Posterior vena cava (tissue), 2 donors: ENCODE measurements at regions of chr12 and their contacts with region 1.

Region 1: GRCh38 chr12:46372544-46373110 is at the start of gene SLC38A2:
- DNase-seq: peak; percentile 99
- total RNA-seq, gene SLC38A2: 255 to 324 TPM

Region 2: DNA sequence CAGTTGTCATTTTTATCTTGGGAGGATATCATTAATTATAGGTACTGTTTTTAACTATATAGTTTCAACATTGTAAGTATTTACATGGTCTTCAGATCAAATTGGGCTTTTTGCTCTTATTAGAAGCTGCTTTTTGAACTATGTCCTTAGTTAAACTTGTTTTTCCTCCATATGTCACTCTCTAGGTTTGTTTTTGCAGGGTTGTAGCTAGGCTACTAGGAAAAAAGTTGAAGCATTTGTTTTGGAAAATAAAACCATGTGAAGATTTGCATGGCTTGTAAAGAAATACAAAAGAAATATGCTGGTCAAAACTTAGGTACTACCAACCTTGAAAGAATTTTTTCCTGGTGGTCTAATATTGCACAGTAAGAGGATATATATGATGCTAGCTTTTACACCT is 639.7 kb before region 1 on chr12:
- intact Hi-C with region 1: no loop called
- DNase-seq: no peak

Region 3: DNA sequence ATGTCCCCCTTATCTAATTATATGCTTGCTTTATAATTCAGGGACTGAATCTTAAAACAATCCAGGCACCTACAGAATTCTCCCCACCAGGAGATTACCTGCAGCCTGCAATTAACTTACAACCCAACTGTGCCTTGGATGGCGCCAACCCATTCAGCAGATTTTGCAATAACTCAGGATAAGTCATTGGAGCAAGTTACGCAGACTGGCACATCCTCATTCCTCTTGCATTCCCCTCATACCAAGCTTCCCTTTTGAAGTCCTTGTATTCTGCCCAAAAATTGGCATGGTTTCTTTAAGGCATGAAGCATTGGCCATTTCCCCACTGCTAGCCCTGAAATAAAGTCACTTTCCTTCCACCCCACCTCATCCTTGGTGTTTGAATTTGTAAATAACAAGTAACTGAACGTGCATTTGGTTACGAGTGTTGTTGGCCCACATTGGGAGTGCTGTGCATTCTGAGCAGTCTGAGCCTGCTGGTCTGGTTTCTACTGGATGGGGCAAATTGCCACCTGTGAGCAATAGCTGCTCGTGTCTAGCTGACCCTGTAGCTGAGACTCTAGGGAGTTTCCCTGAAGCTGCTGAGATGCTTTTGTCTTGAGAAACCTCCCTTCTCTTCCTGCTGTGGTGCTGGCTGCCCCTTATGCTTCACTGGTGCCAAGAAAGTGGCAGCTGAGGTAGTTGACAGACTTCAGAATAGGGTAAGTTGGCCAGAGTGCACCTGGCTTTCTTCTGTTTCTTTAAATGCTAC is 283.0 kb before region 1 on chr12:
- intact Hi-C with region 1: no loop called
- DNase-seq: no peak

Region 4: DNA sequence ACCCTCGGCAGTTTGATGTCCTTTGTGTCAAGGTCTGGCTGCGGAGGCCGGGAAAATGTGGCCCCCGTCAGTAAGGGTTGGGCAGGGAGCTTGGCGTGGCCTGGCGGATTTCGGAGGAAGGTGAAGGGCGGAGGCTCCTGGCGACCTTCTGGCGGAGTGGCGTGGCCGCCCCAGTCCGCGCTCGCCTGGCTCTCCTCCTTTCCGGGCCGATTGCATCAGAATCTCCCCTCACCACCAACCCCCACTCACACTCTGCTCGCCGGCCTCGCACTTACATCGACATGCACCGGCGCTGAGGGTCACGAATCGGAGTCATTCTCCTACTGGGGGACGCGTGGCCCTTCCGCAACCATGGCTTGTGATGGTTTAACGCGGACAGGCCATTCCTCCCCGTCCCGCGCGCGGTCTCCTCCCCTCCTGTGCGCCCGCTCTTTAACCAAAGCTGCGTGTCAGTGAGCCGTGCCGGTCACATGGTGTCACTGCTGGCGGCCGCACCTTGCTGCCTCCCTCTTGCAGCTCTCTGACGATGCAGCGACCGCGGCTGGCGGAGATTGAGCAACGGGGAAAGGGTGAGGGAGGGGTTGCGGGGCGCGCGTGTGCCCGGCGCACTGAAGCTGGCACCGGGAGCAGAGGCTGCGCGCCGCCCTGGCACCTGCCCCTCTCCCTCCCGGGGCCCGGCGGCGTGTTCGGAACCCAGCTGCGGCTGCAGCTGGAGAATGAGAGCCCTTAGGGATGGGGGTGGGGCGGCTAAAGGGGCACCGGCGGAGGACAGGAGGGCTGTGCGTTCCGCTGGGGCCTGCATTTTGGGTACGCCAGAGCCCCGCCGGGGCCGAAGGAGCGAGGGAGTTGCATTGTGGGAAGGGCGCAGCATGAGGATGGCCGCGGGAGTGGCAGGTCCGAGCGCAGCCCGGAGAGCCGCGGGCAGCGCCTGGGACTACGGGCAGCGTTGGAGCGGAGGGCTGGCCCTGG is 103.8 kb before region 1 on chr12 and contains the start of gene SLC38A1:
- intact Hi-C with region 1: loop called in 1 of 2 experiments (anchors 5 kb)
- DNase-seq: peak; percentile 94
- total RNA-seq, gene SLC38A1: 74.4 to 88.0 TPM

Region 5: DNA sequence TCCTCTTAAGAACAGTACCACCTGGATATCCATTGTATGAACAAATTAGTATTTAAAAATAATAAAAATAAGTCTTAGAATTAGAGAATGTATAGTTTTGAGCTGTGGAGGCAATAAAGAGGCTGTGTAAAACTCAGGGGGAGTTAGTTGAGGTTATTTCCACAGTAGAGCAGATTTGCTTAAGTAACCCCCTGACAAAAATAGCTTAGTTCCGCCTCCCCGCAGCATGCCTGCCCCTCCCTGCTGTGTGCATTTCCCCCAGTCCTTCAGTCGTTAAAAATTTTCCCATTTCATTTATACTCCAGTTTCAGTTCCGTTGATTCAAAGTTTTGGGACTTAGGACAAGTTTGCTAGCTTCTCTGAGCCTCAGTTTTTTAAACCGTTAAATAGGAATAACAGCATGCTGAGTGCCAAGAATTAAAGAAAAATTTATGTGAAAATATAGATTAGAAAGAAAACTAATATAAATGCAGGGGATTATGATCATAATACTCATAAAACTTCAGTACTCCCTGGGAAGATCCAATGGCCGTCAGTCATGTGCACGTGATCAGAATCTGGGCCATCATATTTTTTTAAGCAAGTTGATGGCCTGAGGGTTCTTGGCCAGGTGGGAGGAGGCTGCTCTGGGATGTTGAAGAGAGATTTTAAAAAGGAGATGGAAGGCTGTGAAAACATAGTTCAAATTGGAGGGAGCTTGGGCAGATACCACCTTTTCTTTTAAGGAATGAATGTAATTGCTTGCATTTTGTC is 14.4 kb after region 1 on chr12:
- intact Hi-C with region 1: no loop called
- DNase-seq: peak; percentile 82

Region 6: GRCh38 chr12:46556105-46556559 is 183.5 kb after region 1 on chr12:
- intact Hi-C with region 1: loop called in 1 of 2 experiments (anchors 10 kb)
- DNase-seq: no peak

Region 7: GRCh38 chr12:46661110-46661845 is 288.7 kb after region 1 on chr12:
- intact Hi-C with region 1: loop called (anchors 5 to 10 kb)
- DNase-seq: no peak